PC-3 (cell line): ENCODE measurements at regions of chr20 and their contacts with region 1.

Region 1: DNA sequence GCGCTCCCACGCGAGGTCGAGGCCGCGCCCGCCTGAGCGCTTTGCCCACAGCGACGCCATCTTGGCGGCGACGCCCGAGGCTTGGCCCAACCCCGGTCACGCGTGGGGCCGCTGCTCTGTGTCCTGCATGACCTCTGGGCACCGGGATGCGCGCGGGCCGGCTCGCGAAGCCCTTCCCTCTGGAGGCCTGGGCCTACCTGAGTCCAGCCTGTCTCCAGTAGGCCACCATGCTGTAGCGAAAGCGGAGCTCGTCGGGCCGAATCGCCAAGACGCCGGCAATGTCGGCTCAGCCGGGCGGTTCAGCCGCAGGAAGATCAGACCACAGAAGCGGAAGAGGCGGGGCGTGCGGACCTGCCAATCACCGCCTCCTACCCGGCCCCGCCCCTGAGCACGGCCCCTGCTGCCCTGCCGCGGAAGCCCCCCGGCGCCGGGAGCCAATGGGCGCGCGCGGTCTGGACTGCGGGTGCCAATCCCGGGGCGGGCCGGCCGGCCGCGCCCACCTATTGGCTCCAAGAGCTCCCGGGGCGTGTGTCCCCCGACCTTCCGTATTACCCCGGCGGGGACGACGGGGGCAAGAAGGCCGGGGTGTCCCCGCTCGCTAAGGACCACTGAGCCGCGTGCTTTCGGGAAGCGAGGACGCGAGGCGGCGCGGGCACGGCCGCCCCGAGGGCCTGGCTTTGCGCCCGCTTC is at the start of gene ATP5F1E:
- DNase-seq: peak; percentile 98
- ATAC-seq: peak; percentile 91
- H3K4me3 ChIP-seq: peak within 1 kb of the TSS; percentile 77
- H3K27ac ChIP-seq: peak within 1 kb of the TSS; percentile 68
- H3K4me1 ChIP-seq: peaks cover 54% of the 10 kb centered on the region
- H3K27me3 ChIP-seq: no peaks in the 10 kb centered on the region
- CTCF ChIP-seq: no peak
- total RNA-seq, gene ATP5F1E: 47.1 and 58.5 TPM in 2 replicates

Region 2: GRCh38 chr20:58880994-58881752 is 151.0 kb before region 1 on chr20:
- CTCF ChIA-PET with region 1: interaction called, 11 read pairs
- POLR2A ChIA-PET with region 1: no interaction called
- intact Hi-C with region 1: no loop called
- DNase-seq: peak; percentile 45
- ATAC-seq: no peak
- H3K4me3 ChIP-seq: no peak overlapping the region
- H3K27ac ChIP-seq: no peak overlapping the region
- H3K4me1 ChIP-seq: peaks cover 8% of the 10 kb centered on the region
- H3K27me3 ChIP-seq: no peaks in the 10 kb centered on the region
- CTCF ChIP-seq: peak; percentile 77

Region 3: GRCh38 chr20:58980700-58981627 is 51.2 kb before region 1 on chr20 and contains the start of gene NELFCD:
- CTCF ChIA-PET with region 1: no interaction called
- POLR2A ChIA-PET with region 1: no interaction called
- intact Hi-C with region 1: loop called (anchors 5 kb)
- DNase-seq: peak; percentile 92
- ATAC-seq: peak; percentile 88
- H3K4me3 ChIP-seq: peak within 1 kb of the TSS; percentile 76
- H3K27ac ChIP-seq: peak within 1 kb of the TSS; percentile 24; the same call in 1 of the 2 replicates
- H3K4me1 ChIP-seq: peaks cover 7% of the 10 kb centered on the region; the same call in 1 of the 2 replicates
- H3K27me3 ChIP-seq: no peaks in the 10 kb centered on the region
- CTCF ChIP-seq: no peak
- total RNA-seq, gene NELFCD: 131 and 144 TPM in 2 replicates

Region 4: GRCh38 chr20:59010995-59011873 is 20.9 kb before region 1 on chr20:
- CTCF ChIA-PET with region 1: no interaction called
- POLR2A ChIA-PET with region 1: interaction called, 16 read pairs
- intact Hi-C with region 1: no loop called
- DNase-seq: peak; percentile 94
- ATAC-seq: peak; percentile 60
- H3K4me3 ChIP-seq: no peak overlapping the region
- H3K27ac ChIP-seq: peak overlapping the region; percentile 52
- H3K4me1 ChIP-seq: peaks cover 29% of the 10 kb centered on the region
- H3K27me3 ChIP-seq: no peaks in the 10 kb centered on the region
- CTCF ChIP-seq: no peak

Region 5: GRCh38 chr20:59042796-59043660 is 10.9 kb after region 1 on chr20:
- CTCF ChIA-PET with region 1: interaction called, 3 read pairs
- POLR2A ChIA-PET with region 1: interaction called, 6 read pairs
- intact Hi-C with region 1: loop called (anchors 1 kb)
- DNase-seq: peak; percentile 99
- ATAC-seq: peak; percentile 93
- H3K4me3 ChIP-seq: peak overlapping the region; percentile 72
- H3K27ac ChIP-seq: peak overlapping the region; percentile 87
- H3K4me1 ChIP-seq: peaks cover 55% of the 10 kb centered on the region
- H3K27me3 ChIP-seq: no peaks in the 10 kb centered on the region
- CTCF ChIP-seq: no peak